Calu3 (cell line): ENCODE measurements at regions of chr22 and their contacts with region 1.

Region 1: DNA sequence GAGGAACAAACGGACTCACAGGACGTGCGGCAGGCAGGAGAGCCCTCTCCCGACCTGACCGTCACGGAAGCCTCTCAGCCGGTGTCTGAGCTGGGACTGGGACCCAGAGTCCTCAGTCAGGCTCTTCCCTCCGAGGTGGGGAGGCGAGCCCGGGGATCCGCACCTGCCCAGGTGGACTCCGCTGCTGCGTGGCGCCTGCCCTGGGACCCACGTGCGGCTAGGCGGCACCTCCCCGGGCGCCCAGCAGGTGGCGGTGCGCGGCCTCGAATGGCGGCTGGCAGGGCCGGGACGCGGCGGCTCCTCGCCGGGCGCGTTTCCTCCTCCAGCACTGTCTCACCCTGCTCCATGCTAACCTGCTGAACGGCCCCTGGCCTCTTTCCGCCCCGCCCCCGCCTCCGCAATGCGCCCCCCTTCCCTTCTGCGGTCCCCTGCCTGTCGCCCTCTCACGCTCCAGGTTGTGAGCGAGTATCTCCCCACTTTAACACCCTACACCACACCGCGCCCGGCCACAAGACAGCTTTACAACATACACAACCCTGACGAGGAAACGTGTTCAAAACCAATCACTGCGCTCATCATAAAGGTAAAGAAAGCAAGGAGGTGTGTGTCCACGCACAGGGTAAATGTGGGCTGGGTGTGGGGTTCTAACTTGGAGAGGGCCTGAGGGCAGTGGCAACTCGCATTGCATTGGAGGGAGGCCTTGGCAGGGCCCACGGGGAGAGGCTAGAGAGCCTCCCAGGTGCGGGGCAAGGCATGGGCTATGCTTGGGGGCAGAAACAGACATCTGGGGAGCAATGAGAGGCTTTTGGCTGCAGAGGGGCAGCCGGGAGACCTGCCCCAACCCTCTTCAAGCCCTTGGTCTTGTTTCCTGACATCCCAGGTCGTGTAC is 25.9 kb upstream of the ATXN10 start:
- DNase-seq: peak; percentile 95
- H3K4me3 Mint-ChIP-seq: peak overlapping the region; percentile 64
- H3K27ac Mint-ChIP-seq: peak overlapping the region; percentile 97
- H3K4me1 Mint-ChIP-seq: peaks cover 43% of the 10 kb centered on the region
- H3K27me3 Mint-ChIP-seq: no peaks in the 10 kb centered on the region
- CTCF ChIP-seq: peak; percentile 97

Region 2: DNA sequence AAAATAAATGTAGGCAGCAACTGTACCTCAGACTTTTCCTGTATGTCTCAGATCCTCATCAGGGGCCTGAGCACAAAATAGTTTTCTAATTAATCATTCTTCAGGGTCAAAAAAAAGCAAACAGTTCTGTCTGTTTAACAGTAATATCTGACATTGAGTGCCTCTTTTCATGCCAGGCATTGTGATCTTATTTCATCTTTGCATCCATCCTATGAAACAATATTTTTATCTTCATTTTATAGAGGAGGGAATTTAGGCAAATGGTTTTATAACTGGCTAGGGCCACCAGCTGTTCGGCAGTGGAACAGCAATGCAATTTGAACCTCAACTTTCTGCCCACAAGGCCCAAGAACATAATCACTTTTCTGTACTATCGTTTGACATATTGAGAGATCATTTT is 185.6 kb after region 1 on chr22:
- CTCF ChIA-PET with region 1: no interaction called
- intact Hi-C with region 1: loop called (anchors 5 kb)
- DNase-seq: peak; percentile 14
- H3K4me3 Mint-ChIP-seq: no peak overlapping the region
- H3K27ac Mint-ChIP-seq: no peak overlapping the region
- H3K4me1 Mint-ChIP-seq: peaks cover 22% of the 10 kb centered on the region
- H3K27me3 Mint-ChIP-seq: no peaks in the 10 kb centered on the region
- CTCF ChIP-seq: peak; percentile 61

Region 3: DNA sequence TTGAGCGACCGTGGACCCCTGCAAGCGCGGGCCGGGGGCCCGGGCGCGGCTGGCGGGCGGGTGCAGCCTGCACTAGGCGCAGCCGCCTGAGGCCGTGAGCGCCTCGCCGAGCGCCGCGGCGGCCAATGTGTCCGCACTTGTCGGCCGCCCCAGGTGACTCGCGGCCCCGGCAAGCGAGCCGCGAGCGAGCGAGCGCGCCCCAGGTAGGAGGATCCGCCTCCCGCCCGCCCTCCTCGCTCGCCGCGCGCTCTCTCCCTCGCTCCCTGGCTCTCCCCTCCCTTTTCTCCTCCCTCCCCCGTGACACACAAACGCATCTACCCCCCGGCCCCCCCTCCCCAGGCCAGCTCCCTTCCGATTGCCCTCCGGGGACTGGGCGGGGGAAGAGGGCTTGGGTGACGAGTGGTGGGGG is 331.2 kb after region 1 on chr22 and contains the start of gene WNT7B:
- CTCF ChIA-PET with region 1: no interaction called
- intact Hi-C with region 1: loop called (anchors 2 kb)
- DNase-seq: peak; percentile 84
- H3K4me3 Mint-ChIP-seq: no peak within 1 kb of the TSS
- H3K27ac Mint-ChIP-seq: no peak within 1 kb of the TSS
- H3K4me1 Mint-ChIP-seq: peaks cover 22% of the 10 kb centered on the region
- H3K27me3 Mint-ChIP-seq: no peaks in the 10 kb centered on the region
- CTCF ChIP-seq: no peak
- total RNA-seq, gene WNT7B: 97.0 and 100.0 TPM in 2 replicates